CD8-positive, alpha-beta T cell (primary cell): ENCODE measurements at regions of chr20 and their contacts with region 1.

Region 1: DNA sequence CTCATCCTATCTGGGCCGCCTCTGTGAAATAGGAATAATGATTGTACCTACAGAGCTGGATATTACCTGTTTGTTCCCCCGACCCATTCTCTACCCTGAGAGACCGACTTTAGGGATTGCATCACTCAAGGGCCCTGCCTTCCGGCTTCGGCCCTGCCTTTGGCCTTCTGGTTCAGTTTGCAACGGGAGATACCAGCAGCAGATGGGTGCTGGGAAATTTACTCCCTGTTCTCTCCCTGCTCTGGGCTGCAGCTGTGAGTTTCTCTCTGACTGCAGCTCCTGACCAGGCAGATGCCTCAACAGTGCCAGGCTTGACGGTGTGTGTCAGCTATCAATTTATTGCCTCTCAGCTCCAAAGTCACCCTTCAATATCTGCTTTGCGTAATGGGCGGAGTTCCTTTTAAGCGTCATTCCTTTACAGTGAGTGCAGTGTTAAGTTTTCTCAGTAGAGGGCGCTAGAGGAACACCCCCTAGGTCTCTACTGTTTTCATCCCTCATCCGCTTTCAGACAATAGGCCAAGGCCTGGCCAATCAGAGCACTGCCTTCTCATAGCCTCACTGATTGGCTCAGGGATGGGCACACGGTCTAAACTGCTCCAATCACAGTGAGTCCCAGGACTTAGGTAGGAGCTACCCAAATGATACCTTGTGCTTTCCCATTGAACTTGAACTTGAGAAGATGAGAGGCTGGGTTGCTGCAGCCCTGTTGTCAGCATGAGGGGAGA is 30.0 kb downstream of the KCNG1 start:
- DNase-seq: peak in 4 of 9 experiments; percentile 22 to 63 (median 48)
- ATAC-seq: peak; percentile 85
- H3K4me3 ChIP-seq: no peak overlapping the region
- H3K4me3 Mint-ChIP-seq: no peak overlapping the region
- H3K27ac ChIP-seq: no peak overlapping the region
- H3K27ac Mint-ChIP-seq: no peak overlapping the region
- H3K4me1 ChIP-seq: no peaks in the 10 kb centered on the region
- H3K4me1 Mint-ChIP-seq: no peaks in the 10 kb centered on the region
- H3K27me3 ChIP-seq: peaks cover 2 to 3% of the 10 kb centered on the region in 2 experiments
- H3K27me3 Mint-ChIP-seq: peaks cover 13% of the 10 kb centered on the region
- CTCF ChIP-seq: peak; percentile 46

Region 2: GRCh38 chr20:50919567-50919966 is 73.3 kb before region 1 on chr20:
- CTCF ChIA-PET with region 1: no interaction called
- POLR2A ChIA-PET with region 1: no interaction called
- intact Hi-C with region 1: no loop called
- DNase-seq: no peak
- ATAC-seq: no peak
- H3K4me3 ChIP-seq: no peak overlapping the region
- H3K4me3 Mint-ChIP-seq: peak overlapping the region; percentile 49
- H3K27ac ChIP-seq: no peak overlapping the region
- H3K27ac Mint-ChIP-seq: peak overlapping the region; percentile 11
- H3K4me1 ChIP-seq: peaks cover 73% of the 10 kb centered on the region
- H3K4me1 Mint-ChIP-seq: peaks cover 87% of the 10 kb centered on the region
- H3K27me3 ChIP-seq: no peaks in the 10 kb centered on the region
- H3K27me3 Mint-ChIP-seq: no peaks in the 10 kb centered on the region
- CTCF ChIP-seq: no peak

Region 3: GRCh38 chr20:50980851-50981713 is 11.8 kb before region 1 on chr20:
- CTCF ChIA-PET with region 1: interaction called, 29 read pairs
- POLR2A ChIA-PET with region 1: no interaction called
- intact Hi-C with region 1: no loop called
- DNase-seq: peak; percentile 22 to 75 (median 70)
- ATAC-seq: peak; percentile 65
- H3K4me3 ChIP-seq: no peak overlapping the region
- H3K4me3 Mint-ChIP-seq: no peak overlapping the region
- H3K27ac ChIP-seq: no peak overlapping the region
- H3K27ac Mint-ChIP-seq: no peak overlapping the region
- H3K4me1 ChIP-seq: no peaks in the 10 kb centered on the region
- H3K4me1 Mint-ChIP-seq: peaks cover 2% of the 10 kb centered on the region
- H3K27me3 ChIP-seq: no peaks in the 10 kb centered on the region
- H3K27me3 Mint-ChIP-seq: peaks cover 34% of the 10 kb centered on the region
- CTCF ChIP-seq: peak; percentile 82